ENCODE measurements at regions of chr1 and their contacts with region 1.

Region 1: GRCh38 chr1:157992031-157992832 is 1.2 kb upstream of the KIRREL1 start:
- DNase-seq: no peak
- H3K4me3 ChIP-seq: no peak overlapping the region
- CTCF ChIP-seq: peak; percentile 95

Region 2: DNA sequence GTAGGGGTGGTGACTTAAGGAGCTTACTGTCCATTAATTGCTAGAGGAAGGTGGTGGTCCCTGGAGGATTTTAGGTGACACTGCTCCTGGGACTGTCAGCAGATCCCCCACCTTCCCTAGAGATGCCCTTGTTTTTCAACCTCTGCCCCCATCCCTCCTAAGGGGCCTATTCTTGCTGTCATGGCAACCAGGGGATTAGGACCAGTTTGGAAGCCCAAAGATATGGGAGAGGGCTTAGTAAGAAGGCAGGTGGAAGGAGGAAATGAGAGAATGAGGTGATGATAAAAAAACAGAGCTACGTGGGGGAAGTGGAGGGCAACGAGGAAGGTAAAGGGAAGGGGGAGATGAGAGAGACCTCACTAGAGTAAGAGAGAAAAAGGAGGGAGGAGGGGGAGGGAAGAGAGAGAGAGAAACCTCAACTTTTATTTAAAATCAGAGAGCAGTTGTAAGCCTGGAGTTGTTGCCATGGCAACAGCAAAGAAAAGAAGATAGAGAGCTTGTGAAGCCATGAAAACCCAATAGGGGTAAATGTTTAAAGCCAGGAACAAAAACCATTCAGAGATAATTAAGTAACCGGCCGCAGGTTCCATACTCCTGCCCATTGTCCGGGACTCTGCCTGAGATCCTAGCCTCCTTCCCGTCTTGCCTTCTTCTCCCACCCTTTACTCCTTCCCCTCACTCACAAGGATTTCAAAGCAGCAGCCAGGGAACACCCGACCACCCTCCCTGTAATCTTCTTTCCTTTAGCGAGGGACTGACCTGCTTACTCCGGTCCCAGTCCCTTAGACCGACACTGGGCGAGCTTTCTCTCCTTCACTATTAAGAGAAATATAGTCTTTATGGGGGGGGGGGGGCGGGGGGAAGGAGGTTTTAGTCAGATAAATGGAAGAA is 21.9 kb after region 1 on chr1:
- CTCF ChIA-PET with region 1: interaction called, 94 read pairs
- POLR2A ChIA-PET with region 1: interaction called, 10 read pairs
- DNase-seq: no peak
- H3K4me3 ChIP-seq: no peak overlapping the region
- CTCF ChIP-seq: no peak

Region 3: GRCh38 chr1:158035976-158036583 is 43.8 kb after region 1 on chr1:
- CTCF ChIA-PET with region 1: interaction called, 359 read pairs
- POLR2A ChIA-PET with region 1: interaction called, 6 read pairs
- DNase-seq: no peak
- H3K4me3 ChIP-seq: no peak overlapping the region
- CTCF ChIP-seq: peak; percentile 42

Region 4: GRCh38 chr1:158075078-158075477 is 82.8 kb after region 1 on chr1:
- CTCF ChIA-PET with region 1: interaction called, 208 read pairs
- POLR2A ChIA-PET with region 1: interaction called, 3 read pairs
- DNase-seq: no peak
- H3K4me3 ChIP-seq: no peak overlapping the region
- CTCF ChIP-seq: no peak

Region 5: GRCh38 chr1:158101927-158102326 is 109.7 kb after region 1 on chr1:
- CTCF ChIA-PET with region 1: interaction called, 208 read pairs
- POLR2A ChIA-PET with region 1: no interaction called
- DNase-seq: no peak
- H3K4me3 ChIP-seq: no peak overlapping the region
- CTCF ChIP-seq: no peak

Region 6: DNA sequence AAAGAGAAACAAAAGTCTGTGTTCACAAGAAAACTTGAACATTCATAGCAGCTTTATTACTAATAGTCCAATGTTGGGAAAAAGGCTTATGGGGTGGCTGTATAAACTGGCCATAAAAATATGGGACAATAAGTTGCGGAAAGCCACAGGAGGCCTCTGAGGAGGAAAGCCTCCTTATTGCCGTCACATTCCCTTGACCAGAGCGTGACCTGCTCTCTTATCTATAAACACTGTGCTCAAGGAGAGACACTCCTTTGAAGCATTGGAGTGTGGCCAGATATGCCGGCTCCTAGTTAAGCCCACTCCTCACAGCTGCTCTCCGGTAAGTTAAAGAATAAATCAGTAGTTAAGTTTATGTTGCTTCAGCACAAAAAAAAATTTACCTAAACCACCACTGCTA is 542.3 kb after region 1 on chr1:
- CTCF ChIA-PET with region 1: no interaction called
- POLR2A ChIA-PET with region 1: no interaction called
- DNase-seq: no peak
- H3K4me3 ChIP-seq: no peak overlapping the region
- CTCF ChIP-seq: no peak

Region 7: DNA sequence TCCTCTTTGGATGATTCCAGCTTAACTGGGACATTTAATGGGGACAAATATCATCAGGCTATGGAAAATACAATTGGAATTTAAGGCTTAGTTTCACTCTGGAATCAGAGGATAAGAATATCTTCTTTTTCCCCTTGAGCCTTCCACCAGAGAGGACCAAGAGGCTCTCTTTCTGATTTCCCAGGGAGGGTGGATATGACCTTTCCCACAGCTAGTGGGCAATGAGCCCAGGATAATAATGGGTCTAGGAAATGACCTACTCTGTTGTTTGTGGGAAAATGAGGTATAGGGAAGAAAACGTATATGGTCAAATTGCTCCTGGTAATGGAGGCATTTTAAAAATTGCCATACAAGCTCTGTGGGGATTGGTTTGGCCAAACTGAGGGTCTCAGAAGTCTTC is 560.1 kb after region 1 on chr1:
- CTCF ChIA-PET with region 1: no interaction called
- POLR2A ChIA-PET with region 1: no interaction called
- DNase-seq: no peak
- H3K4me3 ChIP-seq: no peak overlapping the region
- CTCF ChIP-seq: no peak